ENCODE measurements at regions of chr11 and their contacts with region 1.

Region 1: DNA sequence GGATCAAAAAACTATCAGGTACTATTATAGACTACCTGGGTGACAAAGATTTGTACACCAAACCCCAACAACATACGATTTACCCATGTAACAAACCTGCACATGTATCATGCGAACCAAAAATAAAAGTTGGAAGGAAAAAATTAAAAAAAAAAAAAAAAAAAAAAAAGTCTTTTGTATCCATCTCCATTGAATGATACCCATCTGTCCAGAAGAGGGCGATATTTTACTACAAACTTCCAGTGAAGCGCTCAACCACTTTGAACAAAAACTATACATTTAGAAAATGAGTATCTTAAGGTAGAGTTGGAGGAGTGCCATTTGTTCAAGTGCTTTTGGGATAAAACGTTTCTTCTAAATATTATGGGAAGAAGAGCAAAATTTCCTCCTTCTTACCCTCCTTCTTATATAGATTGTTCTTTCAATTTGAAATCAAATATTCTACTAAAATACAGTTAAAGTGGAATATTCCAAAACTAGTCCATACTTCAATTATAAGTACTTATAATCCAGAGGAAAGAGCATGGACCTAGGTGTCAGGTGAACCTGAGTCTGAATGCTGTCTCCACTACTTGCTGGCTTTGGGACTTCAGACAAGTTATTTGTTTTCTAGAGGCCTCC is 23.3 kb downstream of the ARL14EP start:
- DNase-seq: peak; percentile 67
- H3K4me3 Mint-ChIP-seq: no peak overlapping the region
- H3K27ac Mint-ChIP-seq: no peak overlapping the region
- H3K4me1 Mint-ChIP-seq: peaks cover 6% of the 10 kb centered on the region
- H3K27me3 Mint-ChIP-seq: peaks cover 7% of the 10 kb centered on the region

Region 2: DNA sequence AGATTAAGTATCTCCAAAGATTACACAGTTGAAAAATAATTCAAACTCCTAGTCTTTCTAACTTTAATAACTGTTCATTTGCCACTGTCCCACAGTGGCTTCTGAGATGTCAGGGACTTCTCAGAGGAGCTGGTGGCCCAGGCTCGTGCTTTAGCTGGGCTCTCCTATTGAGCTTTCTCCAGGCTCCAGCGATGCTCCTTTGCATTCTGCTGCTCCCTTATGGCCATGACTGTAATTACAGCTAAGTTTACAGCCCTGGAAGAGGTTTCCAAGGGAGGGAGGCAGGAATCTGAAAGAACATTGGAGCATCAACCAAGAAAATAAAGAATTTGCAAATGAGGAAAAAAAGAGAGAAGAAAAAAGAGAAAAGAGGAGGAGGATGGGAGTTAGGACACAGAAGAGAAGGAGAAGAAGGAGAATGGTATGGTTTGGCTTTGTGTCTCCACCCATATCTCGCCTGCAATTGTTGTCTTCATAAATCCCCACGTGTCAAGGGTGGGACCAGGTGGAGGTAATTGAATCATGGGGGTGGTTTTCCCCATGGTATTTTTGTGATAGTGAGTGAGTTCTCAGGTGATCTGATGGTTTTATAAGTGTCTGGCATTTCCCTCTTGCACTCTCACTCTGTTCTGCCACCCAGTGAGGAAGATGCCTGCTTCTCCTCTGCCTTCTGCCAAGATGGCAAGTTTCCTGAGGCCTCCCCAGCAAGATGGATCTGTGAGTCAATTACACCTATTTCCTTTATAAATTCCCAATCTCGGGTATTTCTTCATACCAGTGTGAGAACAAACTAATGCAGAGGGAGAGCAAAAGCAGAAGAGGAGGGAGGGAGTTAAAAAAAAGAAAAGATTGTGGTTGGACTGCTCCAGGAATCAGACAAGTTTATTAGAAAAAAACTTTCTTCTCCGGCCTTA is 1186.4 kb before region 1 on chr11:
- intact Hi-C with region 1: no loop called
- DNase-seq: no peak
- H3K4me3 Mint-ChIP-seq: no peak overlapping the region
- H3K27ac Mint-ChIP-seq: no peak overlapping the region
- H3K4me1 Mint-ChIP-seq: no peaks in the 10 kb centered on the region
- H3K27me3 Mint-ChIP-seq: no peaks in the 10 kb centered on the region

Region 3: GRCh38 chr11:30586251-30587144 is 240.3 kb after region 1 on chr11 and contains the start of gene MPPED2:
- intact Hi-C with region 1: loop called (anchors 10 kb)
- DNase-seq: peak; percentile 74
- H3K4me3 Mint-ChIP-seq: peak within 1 kb of the TSS; percentile 69
- H3K27ac Mint-ChIP-seq: no peak within 1 kb of the TSS
- H3K4me1 Mint-ChIP-seq: peaks cover 2% of the 10 kb centered on the region
- H3K27me3 Mint-ChIP-seq: peaks cover 56% of the 10 kb centered on the region
- total RNA-seq, gene MPPED2: not detected in 2 replicates

Region 4: DNA sequence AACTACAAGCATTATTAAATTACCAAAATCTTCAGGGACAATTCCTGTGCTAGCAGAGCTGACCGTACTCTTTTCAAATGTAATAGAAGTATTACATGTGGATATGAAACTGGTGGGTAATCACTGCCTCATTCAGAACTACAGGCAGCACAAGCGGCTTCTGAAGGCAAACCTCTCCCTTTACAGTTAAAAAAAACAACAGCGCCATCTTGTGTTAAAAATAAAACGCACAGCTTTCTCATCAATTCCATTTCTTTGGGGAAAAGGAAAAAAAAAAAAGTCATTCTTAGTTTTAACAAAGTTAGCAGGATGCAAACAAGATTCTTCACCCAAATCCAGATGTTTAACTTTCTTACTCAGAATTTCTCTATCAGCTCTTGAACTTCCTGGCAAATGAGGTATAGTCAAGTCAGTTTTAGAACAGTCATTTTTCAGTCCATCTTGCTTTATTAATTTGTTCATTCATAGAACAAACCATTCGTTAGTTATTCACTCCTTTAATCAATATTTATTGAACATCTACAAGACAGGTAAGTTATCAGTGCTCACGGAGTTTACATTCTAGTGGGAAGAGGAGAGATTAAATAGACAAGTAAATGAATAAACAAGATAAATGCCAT is 571.8 kb after region 1 on chr11:
- intact Hi-C with region 1: loop called (anchors 1 kb)
- DNase-seq: peak; percentile 63
- H3K4me3 Mint-ChIP-seq: no peak overlapping the region
- H3K27ac Mint-ChIP-seq: no peak overlapping the region
- H3K4me1 Mint-ChIP-seq: no peaks in the 10 kb centered on the region
- H3K27me3 Mint-ChIP-seq: peaks cover 6% of the 10 kb centered on the region

Measured in activated CD4-positive, alpha-beta T cell treated with anti-CD3 and anti-CD28 coated beads, Interleukin-2, amount 10 ng/mL, durations not matched to agents 24 days and 14 days (primary cell).